BJ (cell line): ENCODE measurements at regions of chr2 and their contacts with region 1.

Region 1: DNA sequence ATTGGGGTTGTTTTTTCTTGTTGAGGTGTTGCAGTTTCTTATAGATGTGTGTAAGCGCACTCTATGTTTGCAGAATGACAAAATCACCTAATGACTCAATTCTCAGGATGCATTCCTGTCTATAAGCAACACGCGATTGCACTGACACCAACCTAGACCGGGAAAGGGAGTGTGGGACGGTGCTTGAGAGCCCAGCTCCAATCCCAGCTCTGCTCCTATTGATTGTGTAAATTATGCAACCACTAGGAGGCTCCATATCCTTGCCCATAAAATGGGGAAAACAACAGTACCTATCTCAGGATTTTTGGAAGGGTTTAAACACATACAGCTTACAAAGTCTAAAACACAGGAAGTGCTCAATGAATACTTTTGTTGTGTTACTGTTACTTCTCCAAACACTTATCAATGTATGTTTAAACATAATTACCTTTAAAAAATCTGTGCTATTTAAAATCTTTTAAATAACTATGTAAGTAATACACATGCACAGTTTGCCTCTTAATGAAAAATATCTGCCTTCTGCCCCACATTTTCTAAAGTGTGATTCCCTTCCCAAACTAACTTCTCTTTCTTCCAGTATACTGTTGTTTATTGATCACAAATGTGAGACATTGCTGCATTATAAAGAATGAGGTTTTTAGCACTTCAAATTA is 132.5 kb downstream of the SPHKAP start:
- DNase-seq: no peak
- H3K4me3 ChIP-seq: no peak overlapping the region
- H3K27me3 ChIP-seq: no peaks in the 10 kb centered on the region
- CTCF ChIP-seq: peak; percentile 74

Region 2: DNA sequence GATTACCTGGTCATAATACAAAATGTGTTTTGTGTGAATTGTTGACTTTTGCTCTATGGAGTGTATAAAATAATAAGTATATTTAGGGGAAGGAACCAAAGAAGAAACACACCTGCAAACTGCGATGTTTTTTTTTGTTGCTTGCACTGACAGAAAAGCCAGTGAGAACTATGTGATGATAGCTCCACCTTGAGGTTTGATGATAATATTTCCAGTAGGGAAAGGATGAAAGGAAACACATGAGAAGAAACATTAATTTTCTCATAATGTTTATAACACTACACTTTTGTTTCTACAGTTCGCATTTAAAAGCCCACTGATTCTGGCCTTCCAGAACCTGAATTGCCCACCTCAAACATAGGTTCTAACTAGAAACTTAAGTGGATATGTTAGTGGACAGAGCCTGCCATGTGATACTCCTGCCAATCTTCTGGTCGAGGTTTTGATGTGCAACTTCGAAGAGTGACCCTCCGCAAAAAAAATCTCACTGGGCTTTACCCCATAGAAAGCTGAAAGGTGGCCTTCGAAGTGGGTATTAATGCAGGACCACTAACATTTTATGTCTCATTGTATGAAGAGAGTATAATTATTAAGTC is 608.9 kb after region 1 on chr2:
- CTCF ChIA-PET with region 1: interaction called, 50 read pairs
- POLR2A ChIA-PET with region 1: no interaction called
- DNase-seq: no peak
- H3K4me3 ChIP-seq: no peak overlapping the region
- H3K27me3 ChIP-seq: no peaks in the 10 kb centered on the region
- CTCF ChIP-seq: peak; percentile 57